ENCODE measurements at regions of chr19 and their contacts with region 1.

Region 1: GRCh38 chr19:19342756-19343322 is 22.2 kb downstream of the MAU2 start:
- DNase-seq: peak; percentile 69 to 85
- H3K4me3 ChIP-seq: no peak overlapping the region
- H3K4me3 Mint-ChIP-seq: no peak overlapping the region
- H3K27ac Mint-ChIP-seq: no peak overlapping the region
- H3K4me1 ChIP-seq: no peaks in the 10 kb centered on the region
- H3K4me1 Mint-ChIP-seq: no peaks in the 10 kb centered on the region
- H3K27me3 ChIP-seq: no peaks in the 10 kb centered on the region
- H3K27me3 Mint-ChIP-seq: no peaks in the 10 kb centered on the region
- CTCF ChIP-seq: peak; percentile 80 to 87

Region 2: GRCh38 chr19:19185853-19186740 is 156.7 kb before region 1 on chr19:
- CTCF ChIA-PET with region 1: interaction called, 3 read pairs
- POLR2A ChIA-PET with region 1: no interaction called
- intact Hi-C with region 1: loop called (anchors 1 kb)
- DNase-seq: peak; percentile 66 to 67
- H3K4me3 ChIP-seq: no peak overlapping the region
- H3K4me3 Mint-ChIP-seq: no peak overlapping the region
- H3K27ac Mint-ChIP-seq: no peak overlapping the region
- H3K4me1 ChIP-seq: no peaks in the 10 kb centered on the region
- H3K4me1 Mint-ChIP-seq: no peaks in the 10 kb centered on the region
- H3K27me3 ChIP-seq: no peaks in the 10 kb centered on the region
- H3K27me3 Mint-ChIP-seq: no peaks in the 10 kb centered on the region
- CTCF ChIP-seq: peak; percentile 53 to 68

Region 3: GRCh38 chr19:19361075-19361594 is 18.3 kb after region 1 on chr19:
- CTCF ChIA-PET with region 1: interaction called, 11 read pairs
- POLR2A ChIA-PET with region 1: no interaction called
- intact Hi-C with region 1: no loop called
- DNase-seq: peak; percentile 77 to 82
- H3K4me3 ChIP-seq: no peak overlapping the region
- H3K4me3 Mint-ChIP-seq: no peak overlapping the region
- H3K27ac Mint-ChIP-seq: no peak overlapping the region
- H3K4me1 ChIP-seq: no peaks in the 10 kb centered on the region
- H3K4me1 Mint-ChIP-seq: peaks cover 7% of the 10 kb centered on the region
- H3K27me3 ChIP-seq: no peaks in the 10 kb centered on the region; the same call in 1 of the 2 replicates
- H3K27me3 Mint-ChIP-seq: no peaks in the 10 kb centered on the region
- CTCF ChIP-seq: peak; percentile 69 to 73

Measured in Caco-2 (cell line).